A549 (cell line): ENCODE measurements at regions of chr2 and their contacts with region 1.

Region 1: DNA sequence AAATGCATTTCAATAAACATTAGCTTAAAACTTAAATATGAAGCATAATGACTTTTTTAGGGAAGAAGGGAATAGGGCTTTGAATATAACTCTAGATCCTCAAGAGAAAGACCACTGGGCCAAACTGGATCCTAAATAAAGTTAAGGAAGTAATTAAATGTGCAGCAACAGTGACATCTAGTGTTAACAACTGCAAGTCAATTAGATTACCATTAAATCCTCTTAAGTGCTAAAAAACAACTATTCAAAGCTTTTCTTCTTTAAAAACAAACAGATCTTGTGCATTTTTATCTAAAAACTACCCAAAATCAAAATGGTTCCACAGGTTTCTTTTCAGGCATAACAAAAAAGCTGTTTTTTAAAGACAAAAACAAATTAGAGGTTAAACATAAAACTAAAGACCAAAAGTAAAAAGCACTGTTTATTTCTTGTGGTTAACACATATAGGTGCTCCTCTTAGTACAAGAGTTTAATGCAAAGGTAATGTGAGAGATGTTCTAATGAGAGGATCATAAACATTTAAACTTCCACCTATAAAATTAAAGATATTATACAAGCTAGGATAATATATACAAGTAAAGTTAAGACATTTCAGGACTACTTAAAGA is 111.4 kb downstream of the THADA start:
- DNase-seq: peak; percentile 15 to 85
- ATAC-seq: peak in 1 of 2 experiments; percentile 80; a peak in 3 of 6 replicates
- H3K4me3 ChIP-seq: no peak overlapping the region
- H3K27ac ChIP-seq: peak overlapping the region in 1 of 2 experiments; percentile 46; a peak in 2 of 6 replicates
- H3K4me1 ChIP-seq: peaks cover 22% of the 10 kb centered on the region
- CTCF ChIP-seq: peak; percentile 96
- EP300 ChIP-seq: no peak
- POLR2A ChIP-seq: no peak
- RAD21 ChIP-seq: peak; percentile 87 to 97

Region 2: GRCh38 chr2:42828487-42829425 is 655.7 kb before region 1 on chr2:
- CTCF ChIA-PET with region 1: interaction called, 54 read pairs
- POLR2A ChIA-PET with region 1: no interaction called
- DNase-seq: peak; percentile 80 to 96
- ATAC-seq: peak; percentile 89 to 96
- H3K4me3 ChIP-seq: no peak overlapping the region
- H3K27ac ChIP-seq: peak overlapping the region; percentile 9 to 57; a peak in 5 of 6 replicates
- H3K4me1 ChIP-seq: peaks cover 15% of the 10 kb centered on the region
- CTCF ChIP-seq: peak; percentile 93
- EP300 ChIP-seq: no peak
- POLR2A ChIP-seq: no peak
- RAD21 ChIP-seq: peak; percentile 87 to 93

Region 3: GRCh38 chr2:42957109-42957860 is 527.1 kb before region 1 on chr2:
- CTCF ChIA-PET with region 1: interaction called, 16 read pairs
- POLR2A ChIA-PET with region 1: no interaction called
- DNase-seq: no peak
- ATAC-seq: peak; percentile 16 to 23; a peak in 2 of 6 replicates
- H3K4me3 ChIP-seq: no peak overlapping the region
- H3K27ac ChIP-seq: 0 out of 6 replicates have a peak overlapping the region, but pooled peaks of 1 of the 2 experiments have one; percentile 20
- H3K4me1 ChIP-seq: no peaks in the 10 kb centered on the region
- CTCF ChIP-seq: no peak
- EP300 ChIP-seq: no peak
- POLR2A ChIP-seq: no peak
- RAD21 ChIP-seq: no peak

Region 4: DNA sequence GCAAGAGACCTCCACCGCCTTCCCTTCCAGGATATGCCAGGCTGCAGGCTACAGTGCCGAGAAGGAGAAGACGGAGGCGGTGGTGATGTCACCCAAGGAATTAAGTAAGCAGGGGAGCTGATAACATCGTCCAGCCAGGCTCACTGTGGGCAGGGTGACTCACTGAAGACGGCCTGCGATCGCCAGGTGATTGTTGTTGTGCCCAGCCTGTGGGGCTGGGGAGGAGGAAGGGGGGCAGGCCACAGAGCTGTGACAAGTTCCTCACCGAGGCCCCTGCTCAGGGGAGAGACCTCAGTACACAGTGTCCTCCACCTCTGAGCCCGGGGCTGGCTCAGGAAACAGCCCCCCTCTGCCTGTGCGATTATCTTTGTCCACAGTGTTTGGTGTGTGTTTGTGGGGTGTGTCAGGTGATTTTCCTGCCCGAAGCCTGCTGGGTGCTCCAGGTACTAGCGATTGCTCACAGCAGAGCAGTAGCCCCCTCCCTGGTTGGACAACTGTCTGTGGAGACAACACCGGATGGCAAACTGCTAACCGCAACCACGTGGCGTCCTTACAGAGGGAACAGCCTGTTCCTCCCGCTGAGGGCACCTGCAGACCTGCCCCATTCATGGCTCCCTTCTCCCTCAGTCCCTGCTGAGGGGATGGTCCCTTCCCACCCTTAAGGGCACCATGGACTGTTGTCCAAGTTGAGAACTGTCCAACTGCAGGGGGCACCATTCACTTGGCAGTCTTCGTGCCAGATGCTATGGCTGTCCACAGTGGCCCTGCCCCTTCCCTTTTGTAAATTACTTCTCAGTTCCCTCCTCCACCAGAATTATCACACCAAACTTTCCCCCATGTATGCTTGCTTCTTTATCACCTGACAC is 353.2 kb before region 1 on chr2:
- CTCF ChIA-PET with region 1: interaction called, 22 read pairs
- POLR2A ChIA-PET with region 1: no interaction called
- DNase-seq: peak; percentile 87 to 96
- ATAC-seq: peak; percentile 86 to 87
- H3K4me3 ChIP-seq: no peak overlapping the region
- H3K27ac ChIP-seq: peak overlapping the region; percentile 75 to 86
- H3K4me1 ChIP-seq: peaks cover 31% of the 10 kb centered on the region
- CTCF ChIP-seq: peak; percentile 89
- EP300 ChIP-seq: peak in 1 of 2 experiments; percentile 12; a peak in 1 of 5 replicates
- POLR2A ChIP-seq: no peak
- RAD21 ChIP-seq: peak; percentile 94 to 96

Region 5: DNA sequence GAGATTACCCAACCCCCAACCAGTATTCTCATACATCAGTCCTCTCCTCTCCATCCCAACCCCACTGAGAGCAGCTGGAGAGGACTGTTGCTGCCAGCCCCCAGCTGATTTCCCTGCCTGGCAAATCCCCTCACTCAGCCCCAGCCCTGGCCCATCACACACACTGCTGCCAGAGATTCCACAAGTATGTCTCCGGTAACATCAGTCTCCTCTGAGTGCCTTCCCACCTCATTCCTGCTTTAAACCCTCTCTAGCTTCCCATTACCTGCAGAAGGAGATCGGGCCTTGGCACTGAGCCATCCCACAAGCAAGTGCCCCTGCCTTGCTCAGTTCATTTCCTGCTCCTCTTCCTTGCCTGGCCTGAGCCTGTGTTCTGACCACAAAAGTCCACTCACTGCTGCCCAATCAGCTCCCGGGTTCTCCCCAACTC is 207.4 kb before region 1 on chr2:
- CTCF ChIA-PET with region 1: interaction called, 10 read pairs
- POLR2A ChIA-PET with region 1: no interaction called
- DNase-seq: no peak
- ATAC-seq: peak in 1 of 2 experiments; percentile 16; a peak in 3 of 6 replicates
- H3K4me3 ChIP-seq: no peak overlapping the region
- H3K27ac ChIP-seq: peak overlapping the region; percentile 39 to 56; a peak in 4 of 6 replicates
- H3K4me1 ChIP-seq: peaks cover 17% of the 10 kb centered on the region
- CTCF ChIP-seq: no peak
- EP300 ChIP-seq: no peak
- POLR2A ChIP-seq: no peak
- RAD21 ChIP-seq: no peak

Region 6: GRCh38 chr2:43311294-43311693 is 173.1 kb before region 1 on chr2:
- CTCF ChIA-PET with region 1: no interaction called
- POLR2A ChIA-PET with region 1: no interaction called
- DNase-seq: peak in 1 of 2 experiments; percentile 51
- ATAC-seq: peak in 1 of 2 experiments; percentile 45; a peak in 2 of 6 replicates
- H3K4me3 ChIP-seq: no peak overlapping the region
- H3K27ac ChIP-seq: peak overlapping the region in 1 of 2 experiments; percentile 38; a peak in 1 of 6 replicates
- H3K4me1 ChIP-seq: peaks cover 26% of the 10 kb centered on the region; the same call in 2 of the 3 replicates
- CTCF ChIP-seq: no peak
- EP300 ChIP-seq: no peak; a peak in 2 of 5 replicates
- POLR2A ChIP-seq: no peak
- RAD21 ChIP-seq: no peak; a peak in 1 of 5 replicates

Region 7: DNA sequence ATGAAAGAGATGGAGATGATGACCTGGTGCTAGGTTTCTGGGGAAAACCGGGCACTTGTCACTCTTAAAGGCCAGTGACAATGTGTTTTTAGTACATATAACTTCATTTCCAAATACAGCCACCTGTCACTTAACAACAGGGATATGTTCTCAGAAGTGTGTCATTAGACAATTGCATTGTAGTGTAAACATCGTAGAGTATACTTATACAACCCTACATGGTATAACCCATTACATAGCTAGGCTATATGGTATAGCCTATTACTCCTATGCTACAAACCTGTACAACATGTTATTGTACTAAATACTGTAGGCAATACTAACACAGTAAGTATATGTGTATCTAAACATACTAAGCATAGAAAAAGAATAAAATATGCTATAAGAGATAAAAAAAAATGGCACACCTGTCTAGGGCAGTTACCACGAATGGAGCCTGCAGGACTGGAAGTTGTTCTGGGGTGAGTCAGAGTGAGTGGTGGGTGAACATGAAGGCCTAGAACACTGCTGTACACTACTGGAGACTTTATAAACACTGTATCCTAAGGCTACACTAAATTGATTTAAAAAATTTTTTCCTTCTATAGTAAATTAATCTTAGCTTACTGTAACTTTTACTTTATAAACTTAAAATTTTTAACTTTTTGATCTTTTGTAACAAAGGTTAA is 11.8 kb before region 1 on chr2:
- CTCF ChIA-PET with region 1: interaction called, 26 read pairs
- POLR2A ChIA-PET with region 1: no interaction called
- DNase-seq: no peak
- ATAC-seq: no peak
- H3K4me3 ChIP-seq: no peak overlapping the region
- H3K27ac ChIP-seq: no peak overlapping the region
- H3K4me1 ChIP-seq: peaks cover 29% of the 10 kb centered on the region
- CTCF ChIP-seq: no peak
- EP300 ChIP-seq: no peak
- POLR2A ChIP-seq: no peak
- RAD21 ChIP-seq: no peak